ENCODE measurements at regions of chr9 and their contacts with region 1.

Region 1: GRCh38 chr9:123353984-123354591 is 1.9 kb upstream of the CRB2 start:
- DNase-seq: peak; percentile 84

Region 2: GRCh38 chr9:123383512-123384170 is 29.6 kb after region 1 on chr9:
- CTCF ChIA-PET with region 1: interaction called, 20 read pairs
- POLR2A ChIA-PET with region 1: no interaction called
- DNase-seq: no peak

Region 3: GRCh38 chr9:123472862-123473614 is 119.0 kb after region 1 on chr9:
- CTCF ChIA-PET with region 1: no interaction called
- POLR2A ChIA-PET with region 1: no interaction called
- DNase-seq: no peak

Measured in HEK293T (cell line).